ENCODE measurements at regions of chr1 and their contacts with region 1.

Region 1: GRCh38 chr1:150995896-150996295 is 10.8 kb downstream of the MINDY1 start:
- DNase-seq: no peak
- ATAC-seq: peak; percentile 52
- H3K4me3 ChIP-seq: no peak overlapping the region
- H3K27ac ChIP-seq: no peak overlapping the region
- H3K4me1 ChIP-seq: peaks cover 20% of the 10 kb centered on the region
- H3K27me3 ChIP-seq: no peaks in the 10 kb centered on the region
- CTCF ChIP-seq: peak; percentile 73
- EP300 ChIP-seq: no peak
- POLR2A ChIP-seq: no peak
- RAD21 ChIP-seq: peak; percentile 66

Region 2: GRCh38 chr1:151008190-151008860 is 12.4 kb after region 1 on chr1 and contains the start of gene PRUNE1:
- CTCF ChIA-PET with region 1: no interaction called
- POLR2A ChIA-PET with region 1: interaction called, 55 read pairs
- in situ Hi-C with region 1: no loop called
- intact Hi-C with region 1: no loop called
- DNase-seq: peak; percentile 95
- ATAC-seq: peak; percentile 55
- H3K4me3 ChIP-seq: peak within 1 kb of the TSS; percentile 66 to 99 (median 91)
- H3K27ac ChIP-seq: peak within 1 kb of the TSS; percentile 100
- H3K4me1 ChIP-seq: peaks cover 77% of the 10 kb centered on the region
- H3K27me3 ChIP-seq: no peaks in the 10 kb centered on the region; a peak in 1 of 5 replicates
- CTCF ChIP-seq: no peak
- EP300 ChIP-seq: peak in 1 of 2 experiments; percentile 39; a peak in 2 of 4 replicates
- POLR2A ChIP-seq: peak; percentile 32 to 77
- RAD21 ChIP-seq: 0 out of 2 replicates have a peak, but pooled peaks have one; percentile 4
- total RNA-seq, gene PRUNE1: 19.0 and 26.2 TPM in 2 replicates